Right ventricle myocardium superior (tissue), 1 donor: ENCODE measurements at regions of chr18 and their contacts with region 1.

Region 1: GRCh38 chr18:26656944-26657536 is 108.7 kb upstream of the KCTD1 start:
- DNase-seq: peak; percentile 89
- ATAC-seq: peak; percentile 94

Region 2: DNA sequence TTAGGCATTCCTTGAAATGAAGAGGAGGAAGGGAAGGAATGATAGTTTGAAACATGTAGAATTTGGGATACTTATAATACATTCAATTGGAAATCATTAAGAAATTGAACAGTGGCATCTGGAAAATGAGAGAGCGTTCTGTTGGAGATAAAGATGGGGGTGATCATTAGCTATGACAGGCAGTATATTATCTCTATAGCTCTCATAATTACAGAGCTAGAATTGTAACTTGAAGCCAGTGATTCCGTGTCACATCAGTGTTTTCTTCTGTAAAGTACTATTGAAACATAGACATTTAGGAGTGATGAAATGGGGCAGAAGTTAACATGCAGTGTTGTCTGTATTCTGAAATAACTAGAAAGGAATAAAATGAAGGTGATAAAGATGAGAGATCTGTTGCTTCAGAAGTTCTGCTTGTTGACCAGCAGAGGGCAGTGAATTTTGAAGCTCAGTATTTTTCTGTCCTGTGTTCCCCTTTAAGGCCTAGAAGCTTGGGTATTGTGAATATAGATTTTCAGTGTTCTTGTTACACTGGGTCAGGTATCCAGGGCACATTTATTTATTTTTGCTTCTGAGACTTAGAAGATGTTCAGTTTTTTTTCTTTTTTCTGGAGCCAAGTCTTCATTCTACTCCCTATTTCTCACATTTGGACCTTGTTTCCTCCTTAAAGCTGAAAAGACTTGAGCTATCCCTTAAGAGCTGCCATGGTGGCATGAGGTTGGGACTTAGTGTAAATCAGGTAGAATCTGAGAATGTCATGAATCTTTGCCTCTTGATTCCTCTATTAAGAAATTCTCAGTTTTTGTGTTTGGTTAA is 273.4 kb before region 1 on chr18:
- intact Hi-C with region 1: loop called (anchors 10 kb)
- DNase-seq: no peak
- ATAC-seq: peak; percentile 68